T-cell (primary cell): ENCODE measurements at regions of chr1 and their contacts with region 1.

Region 1: GRCh38 chr1:167517535-167518330 is 596 bp downstream of the CD247 start:
- DNase-seq: peak; percentile 52 to 89 (median 71)
- ATAC-seq: peak; percentile 75 to 80 (median 78)
- H3K4me3 ChIP-seq: peak overlapping the region; percentile 85 to 94
- H3K4me3 Mint-ChIP-seq: peak overlapping the region; percentile 98 to 99 (median 98)
- H3K27ac ChIP-seq: peak overlapping the region; percentile 96
- H3K27ac Mint-ChIP-seq: peak overlapping the region; percentile 98 to 99
- H3K4me1 ChIP-seq: peaks cover 34 to 36% of the 10 kb centered on the region in 2 experiments
- H3K4me1 Mint-ChIP-seq: peaks cover 44 to 48% (median 44%) of the 10 kb centered on the region in 3 donors
- H3K27me3 ChIP-seq: no peaks in the 10 kb centered on the region
- H3K27me3 Mint-ChIP-seq: no peaks in the 10 kb centered on the region

Region 2: DNA sequence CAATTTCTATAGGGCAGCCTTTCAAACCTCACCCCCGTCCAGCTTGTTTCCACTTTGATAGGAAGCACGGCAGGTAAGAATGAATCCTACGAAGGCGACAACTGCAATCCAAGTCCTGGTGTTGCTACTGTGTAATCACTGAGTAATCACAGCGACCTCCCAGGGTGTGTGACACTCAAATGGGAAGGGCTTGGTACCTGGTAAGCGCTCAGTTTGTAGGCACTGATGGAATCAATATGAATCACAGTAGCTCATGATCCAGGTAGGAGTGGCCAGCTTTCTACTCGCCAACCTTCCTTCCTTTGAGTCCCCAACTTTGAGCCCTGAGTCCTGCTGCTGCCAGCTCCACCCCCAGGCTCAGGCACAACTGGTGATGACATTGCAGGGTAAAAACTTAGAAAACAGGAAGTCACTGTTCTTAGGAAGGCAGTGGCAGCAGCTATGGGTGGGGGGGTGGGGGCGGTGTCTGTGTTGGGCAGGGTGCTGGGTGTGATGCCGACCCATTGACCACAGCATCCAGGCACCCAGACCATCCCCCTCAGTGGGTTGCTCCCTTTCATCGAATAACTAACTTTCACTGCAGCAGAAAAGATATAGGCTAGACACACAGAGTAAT is 70.1 kb before region 1 on chr1:
- CTCF ChIA-PET with region 1: interaction called, 4 to 16 read pairs
- POLR2A ChIA-PET with region 1: interaction called, 8 to 13 read pairs
- DNase-seq: peak in 34 of 35 experiments; percentile 61 to 88 (median 70)
- ATAC-seq: peak; percentile 82 to 87 (median 82)
- H3K4me3 ChIP-seq: peak overlapping the region; percentile 7 to 25
- H3K4me3 Mint-ChIP-seq: peak overlapping the region; percentile 69 to 75 (median 75)
- H3K27ac ChIP-seq: peak overlapping the region; percentile 96
- H3K27ac Mint-ChIP-seq: peak overlapping the region; percentile 97 to 98
- H3K4me1 ChIP-seq: peaks cover 57 to 91% of the 10 kb centered on the region in 2 experiments
- H3K4me1 Mint-ChIP-seq: peaks cover 89 to 93% (median 92%) of the 10 kb centered on the region in 3 donors
- H3K27me3 ChIP-seq: no peaks in the 10 kb centered on the region
- H3K27me3 Mint-ChIP-seq: no peaks in the 10 kb centered on the region

Region 3: DNA sequence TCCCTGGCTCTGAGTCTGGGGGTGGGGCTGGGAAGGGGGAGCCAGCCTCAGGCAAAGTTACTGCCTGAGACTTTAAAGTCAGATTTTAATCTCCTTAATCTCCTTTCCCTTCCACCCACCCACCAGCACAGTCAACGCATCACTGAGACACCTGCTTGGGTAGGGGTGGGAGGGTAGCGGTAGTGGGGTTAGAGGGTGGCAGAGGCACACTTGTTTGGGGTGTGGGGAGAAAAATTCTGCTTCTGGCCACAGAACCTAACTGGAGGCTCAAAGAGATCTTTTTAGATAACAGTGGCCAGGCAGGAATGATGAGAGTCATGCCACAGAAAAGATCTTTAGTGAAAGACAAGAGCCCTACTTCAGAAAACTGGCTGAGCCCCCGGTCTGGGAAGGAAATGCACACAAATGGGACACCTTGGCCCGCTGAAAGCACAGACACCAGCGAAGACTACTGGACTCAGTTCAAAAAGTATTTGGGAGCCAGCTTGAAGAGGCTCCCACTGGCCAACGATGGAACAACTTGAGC is 43.5 kb before region 1 on chr1:
- CTCF ChIA-PET with region 1: interaction called in 1 of 2 experiments, 7 read pairs
- POLR2A ChIA-PET with region 1: interaction called, 4 to 12 read pairs
- DNase-seq: peak in 31 of 35 experiments; percentile 40 to 77 (median 59)
- ATAC-seq: peak; percentile 76 to 87 (median 76)
- H3K4me3 ChIP-seq: peak overlapping the region; percentile 20 to 29
- H3K4me3 Mint-ChIP-seq: peak overlapping the region; percentile 60 to 81 (median 68)
- H3K27ac ChIP-seq: peak overlapping the region; percentile 81
- H3K27ac Mint-ChIP-seq: peak overlapping the region; percentile 89 to 92
- H3K4me1 ChIP-seq: peaks cover 67 to 72% of the 10 kb centered on the region in 2 experiments
- H3K4me1 Mint-ChIP-seq: peaks cover 89 to 92% (median 90%) of the 10 kb centered on the region in 3 donors
- H3K27me3 ChIP-seq: no peaks in the 10 kb centered on the region
- H3K27me3 Mint-ChIP-seq: no peaks in the 10 kb centered on the region

Region 4: DNA sequence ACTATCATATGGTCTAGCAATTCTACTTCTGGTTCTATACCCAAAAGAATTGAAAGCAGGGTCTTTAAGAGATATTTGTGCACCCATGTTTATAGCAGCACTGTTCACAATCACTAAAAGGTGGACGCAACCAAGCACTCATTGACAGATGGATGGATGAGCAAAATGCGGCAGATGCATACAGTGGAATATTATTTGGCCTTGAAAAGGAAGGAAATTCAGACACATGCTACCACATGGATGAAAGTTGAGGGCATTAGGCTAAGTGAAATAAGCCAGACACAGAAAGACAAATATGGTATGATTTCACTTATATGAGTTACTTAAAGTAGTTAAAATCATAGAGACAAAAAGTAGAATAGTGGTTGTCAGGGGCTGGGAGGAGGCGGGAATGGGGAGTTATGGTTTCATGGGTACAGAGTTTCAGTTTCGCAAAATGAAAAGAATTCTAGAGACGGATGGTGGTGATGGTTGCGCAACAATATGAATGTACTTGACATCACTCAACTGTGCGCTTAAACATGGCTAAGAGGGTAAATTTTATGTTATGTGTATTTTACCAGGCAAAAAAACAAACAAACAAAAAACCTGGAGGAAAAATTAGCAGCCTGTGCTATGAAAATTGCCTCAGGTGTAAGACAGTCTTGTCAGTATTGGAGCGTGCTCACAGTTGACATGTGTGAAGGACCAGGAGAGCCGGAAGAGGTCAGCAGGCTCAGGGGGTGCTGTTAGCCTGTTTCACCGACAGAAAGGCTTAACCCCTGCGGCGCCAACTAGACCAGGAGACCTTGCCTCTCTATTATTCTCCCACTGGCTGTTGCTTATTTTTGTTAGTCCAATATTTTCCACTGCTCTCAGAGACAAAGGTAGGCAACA is 25.9 kb before region 1 on chr1:
- CTCF ChIA-PET with region 1: interaction called in 1 of 2 experiments, 4 read pairs
- POLR2A ChIA-PET with region 1: interaction called, 10 read pairs
- DNase-seq: peak in 4 of 35 experiments; percentile 19 to 72 (median 35)
- ATAC-seq: peak; percentile 43 to 48 (median 46)
- H3K4me3 ChIP-seq: peak overlapping the region; percentile 17 to 41
- H3K4me3 Mint-ChIP-seq: peak overlapping the region; percentile 66 to 98 (median 72)
- H3K27ac ChIP-seq: peak overlapping the region; percentile 81
- H3K27ac Mint-ChIP-seq: peak overlapping the region; percentile 90 to 97
- H3K4me1 ChIP-seq: peaks cover 65 to 93% of the 10 kb centered on the region in 2 experiments
- H3K4me1 Mint-ChIP-seq: peaks cover 96 to 100% (median 96%) of the 10 kb centered on the region in 3 donors
- H3K27me3 ChIP-seq: no peaks in the 10 kb centered on the region
- H3K27me3 Mint-ChIP-seq: no peaks in the 10 kb centered on the region

Region 5: GRCh38 chr1:167499664-167500101 is 18.1 kb before region 1 on chr1:
- CTCF ChIA-PET with region 1: interaction called, 4 to 13 read pairs
- POLR2A ChIA-PET with region 1: interaction called, 3 to 5 read pairs
- DNase-seq: peak in 7 of 35 experiments; percentile 16 to 65 (median 40)
- ATAC-seq: peak; percentile 46 to 78 (median 53)
- H3K4me3 ChIP-seq: no peak overlapping the region
- H3K4me3 Mint-ChIP-seq: peak overlapping the region; percentile 7 to 98 (median 31)
- H3K27ac ChIP-seq: peak overlapping the region; percentile 66
- H3K27ac Mint-ChIP-seq: peak overlapping the region; percentile 81 to 97
- H3K4me1 ChIP-seq: peaks cover 87% of the 10 kb centered on the region in 2 experiments
- H3K4me1 Mint-ChIP-seq: peaks cover 99 to 100% (median 99%) of the 10 kb centered on the region in 3 donors
- H3K27me3 ChIP-seq: no peaks in the 10 kb centered on the region
- H3K27me3 Mint-ChIP-seq: no peaks in the 10 kb centered on the region

Region 6: GRCh38 chr1:167533851-167534300 is 16.1 kb after region 1 on chr1:
- CTCF ChIA-PET with region 1: interaction called, 11 to 20 read pairs
- POLR2A ChIA-PET with region 1: interaction called in 1 of 2 experiments, 3 read pairs
- DNase-seq: peak in 32 of 35 experiments; percentile 24 to 82 (median 58)
- ATAC-seq: peak; percentile 79 to 81 (median 80)
- H3K4me3 ChIP-seq: no peak overlapping the region
- H3K4me3 Mint-ChIP-seq: no peak overlapping the region
- H3K27ac ChIP-seq: no peak overlapping the region
- H3K27ac Mint-ChIP-seq: no peak overlapping the region
- H3K4me1 ChIP-seq: peaks cover 0 to 5% of the 10 kb centered on the region in 2 experiments
- H3K4me1 Mint-ChIP-seq: peaks cover 0 to 4% (median 3%) of the 10 kb centered on the region in 3 donors
- H3K27me3 ChIP-seq: no peaks in the 10 kb centered on the region
- H3K27me3 Mint-ChIP-seq: no peaks in the 10 kb centered on the region